Activated B cell treated with CpG ODN at 0.5 μM for 24 hours (primary cell): ENCODE measurements at regions of chr7 and their contacts with region 1.

Region 1: DNA sequence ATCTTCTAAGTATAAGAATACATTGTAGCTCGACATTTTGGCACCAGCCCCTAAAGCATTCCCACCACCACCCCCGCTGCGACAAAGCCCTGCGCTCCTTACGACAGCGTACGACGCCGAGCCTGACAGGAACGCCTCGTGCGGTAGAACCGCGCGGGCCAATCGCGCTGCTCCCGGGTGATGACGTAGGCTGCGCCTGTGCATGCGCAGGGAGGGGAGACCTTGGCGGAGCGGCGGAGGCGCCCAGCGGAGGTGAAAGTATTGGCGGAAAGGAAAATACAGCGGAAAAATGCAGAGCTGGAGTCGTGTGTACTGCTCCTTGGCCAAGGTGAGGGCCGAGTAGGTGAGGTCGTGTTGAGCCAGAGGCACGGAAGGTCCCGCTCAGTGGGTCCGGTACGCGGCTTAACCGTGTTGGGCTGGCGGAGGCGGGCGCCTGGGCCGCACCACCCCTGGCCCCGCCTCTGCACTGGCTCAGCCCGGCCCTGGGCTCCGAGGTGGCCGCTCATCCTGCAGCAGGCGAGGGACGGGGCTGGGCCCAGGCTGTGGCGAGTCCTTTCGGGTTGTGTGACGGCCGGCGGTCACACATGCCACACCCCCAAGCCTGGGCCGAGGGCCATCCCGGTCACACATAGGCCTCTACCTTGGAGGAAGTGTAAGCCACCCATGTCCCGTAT is at the start of gene DLD:
- DNase-seq: peak; percentile 89
- ATAC-seq: peak; percentile 97
- H3K4me3 Mint-ChIP-seq: peak within 1 kb of the TSS; percentile 98
- H3K27ac Mint-ChIP-seq: peak within 1 kb of the TSS; percentile 96
- H3K4me1 Mint-ChIP-seq: peaks cover 45% of the 10 kb centered on the region
- H3K27me3 Mint-ChIP-seq: no peaks in the 10 kb centered on the region
- CTCF ChIP-seq: no peak
- total RNA-seq, gene DLD: 55.0 and 66.1 TPM in 2 replicates

Region 2: GRCh38 chr7:107563775-107564552 is 327.1 kb before region 1 on chr7 and contains the starts of genes COG5 and DUS4L:
- CTCF ChIA-PET with region 1: no interaction called
- POLR2A ChIA-PET with region 1: interaction called, 5 read pairs
- intact Hi-C with region 1: loop called (anchors 1 kb)
- DNase-seq: peak; percentile 83
- ATAC-seq: peak; percentile 93
- H3K4me3 Mint-ChIP-seq: peak within 1 kb of the TSS; percentile 93
- H3K27ac Mint-ChIP-seq: peak within 1 kb of the TSS; percentile 82
- H3K4me1 Mint-ChIP-seq: peaks cover 43% of the 10 kb centered on the region
- H3K27me3 Mint-ChIP-seq: no peaks in the 10 kb centered on the region
- CTCF ChIP-seq: no peak
- total RNA-seq, gene COG5: 40.6 and 47.0 TPM in 2 replicates
- total RNA-seq, gene DUS4L: 11.0 and 14.6 TPM in 2 replicates

Region 3: GRCh38 chr7:107751113-107751512 is 140.0 kb before region 1 on chr7:
- CTCF ChIA-PET with region 1: no interaction called
- POLR2A ChIA-PET with region 1: no interaction called
- intact Hi-C with region 1: no loop called
- DNase-seq: no peak
- ATAC-seq: no peak
- H3K4me3 Mint-ChIP-seq: no peak overlapping the region
- H3K27ac Mint-ChIP-seq: no peak overlapping the region
- H3K4me1 Mint-ChIP-seq: peaks cover 25% of the 10 kb centered on the region
- H3K27me3 Mint-ChIP-seq: no peaks in the 10 kb centered on the region
- CTCF ChIP-seq: no peak

Region 4: DNA sequence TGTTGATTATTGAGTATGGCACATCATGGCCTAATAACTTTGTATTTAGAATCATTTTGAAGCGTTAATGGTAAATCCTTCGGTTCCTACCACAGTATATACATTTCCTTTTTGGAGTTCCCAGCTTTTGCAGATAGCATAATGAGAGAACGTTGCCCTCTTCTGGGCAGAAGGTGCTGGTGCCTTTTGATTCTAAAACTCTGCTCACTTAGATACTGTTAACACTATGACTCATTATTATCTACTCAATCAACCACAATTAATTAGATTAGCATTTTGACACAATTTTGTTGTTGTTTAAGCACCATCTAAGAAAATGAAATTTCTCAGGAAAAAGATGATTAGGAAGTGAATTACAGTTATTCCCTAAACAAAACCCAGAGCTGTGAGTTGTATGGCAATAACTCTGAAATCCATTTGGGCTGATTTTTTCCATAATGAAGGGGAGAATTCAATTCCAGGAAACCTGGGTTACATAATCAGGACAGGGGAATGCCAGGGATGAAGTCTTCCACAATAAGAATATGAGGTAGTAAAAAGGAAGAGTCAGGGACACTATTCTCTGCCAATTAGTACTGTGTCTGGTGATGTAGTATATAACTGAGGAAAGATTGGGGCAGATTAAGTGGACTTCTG is 11.6 kb before region 1 on chr7:
- CTCF ChIA-PET with region 1: interaction called, 21 read pairs
- POLR2A ChIA-PET with region 1: interaction called, 3 read pairs
- intact Hi-C with region 1: no loop called
- DNase-seq: no peak
- ATAC-seq: peak; percentile 74
- H3K4me3 Mint-ChIP-seq: no peak overlapping the region
- H3K27ac Mint-ChIP-seq: no peak overlapping the region
- H3K4me1 Mint-ChIP-seq: peaks cover under 1% of the 10 kb centered on the region
- H3K27me3 Mint-ChIP-seq: peaks cover 20% of the 10 kb centered on the region
- CTCF ChIP-seq: no peak

Region 5: GRCh38 chr7:108135446-108136190 is 244.5 kb after region 1 on chr7:
- CTCF ChIA-PET with region 1: no interaction called
- POLR2A ChIA-PET with region 1: no interaction called
- intact Hi-C with region 1: loop called (anchors 5 kb)
- DNase-seq: no peak
- ATAC-seq: peak; percentile 95
- H3K4me3 Mint-ChIP-seq: peak overlapping the region; percentile 52
- H3K27ac Mint-ChIP-seq: peak overlapping the region; percentile 87
- H3K4me1 Mint-ChIP-seq: peaks cover 30% of the 10 kb centered on the region
- H3K27me3 Mint-ChIP-seq: no peaks in the 10 kb centered on the region
- CTCF ChIP-seq: no peak

Region 6: DNA sequence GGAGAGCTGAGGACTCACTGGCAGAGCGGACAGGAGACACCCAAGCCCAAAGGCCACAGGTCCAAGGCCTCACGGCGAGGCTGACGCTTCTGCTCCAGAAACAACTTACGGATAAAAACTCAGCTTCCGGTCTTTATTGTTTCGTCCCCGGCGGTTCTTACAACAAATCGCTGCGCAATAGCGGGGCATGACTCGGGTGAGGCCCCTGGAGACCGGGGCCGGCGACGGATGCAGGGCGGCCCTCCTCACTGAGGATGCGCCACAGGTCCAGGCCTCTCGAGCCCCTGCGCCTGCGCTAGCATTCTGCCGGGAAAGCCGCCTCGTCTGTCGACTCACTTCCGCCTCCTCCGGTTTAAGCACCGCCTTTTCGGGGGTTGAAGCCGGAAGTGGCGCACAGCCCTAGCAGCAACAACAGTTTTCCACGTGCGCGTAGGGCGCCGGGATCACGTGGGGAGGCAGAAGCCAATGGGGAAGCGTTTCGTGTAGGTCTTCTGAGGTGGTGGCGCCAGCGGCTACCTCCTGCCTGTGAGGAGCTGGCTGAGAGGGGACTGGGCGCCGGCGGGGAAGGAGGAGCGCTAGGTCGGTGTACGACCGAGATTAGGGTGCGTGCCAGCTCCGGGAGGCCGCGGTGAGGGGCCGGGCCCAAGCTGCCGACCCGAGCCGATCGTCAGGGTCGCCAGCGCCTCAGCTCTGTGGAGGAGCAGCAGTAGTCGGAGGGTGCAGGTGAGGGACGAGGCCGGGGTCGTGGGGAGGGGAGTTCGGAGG is 678.5 kb after region 1 on chr7 and contains the starts of genes DNAJB9 and THAP5:
- CTCF ChIA-PET with region 1: no interaction called
- POLR2A ChIA-PET with region 1: no interaction called
- intact Hi-C with region 1: loop called (anchors 1 kb)
- DNase-seq: peak; percentile 97
- ATAC-seq: peak; percentile 89
- H3K4me3 Mint-ChIP-seq: peak within 1 kb of the TSS; percentile 98
- H3K27ac Mint-ChIP-seq: peak within 1 kb of the TSS; percentile 99
- H3K4me1 Mint-ChIP-seq: peaks cover 66% of the 10 kb centered on the region
- H3K27me3 Mint-ChIP-seq: no peaks in the 10 kb centered on the region
- CTCF ChIP-seq: no peak
- total RNA-seq, gene DNAJB9: 9.0 and 9.9 TPM in 2 replicates
- total RNA-seq, gene THAP5: 22.1 and 26.3 TPM in 2 replicates